Activated T-helper 1 cell treated with anti-CD3 and anti-CD28 coated beads, Interleukin-12 subunit alpha, Interleukin-12 subunit beta, Interleukin-2, Interleukin-4 antibody, amounts not matched to agents 30 ng/mL and 10 ng/mL and 1 ng/mL, durations not matched to agents 14 hours and 24 hours and 36 hours (primary cell): ENCODE measurements at regions of chr10 and their contacts with region 1.

Region 1: DNA sequence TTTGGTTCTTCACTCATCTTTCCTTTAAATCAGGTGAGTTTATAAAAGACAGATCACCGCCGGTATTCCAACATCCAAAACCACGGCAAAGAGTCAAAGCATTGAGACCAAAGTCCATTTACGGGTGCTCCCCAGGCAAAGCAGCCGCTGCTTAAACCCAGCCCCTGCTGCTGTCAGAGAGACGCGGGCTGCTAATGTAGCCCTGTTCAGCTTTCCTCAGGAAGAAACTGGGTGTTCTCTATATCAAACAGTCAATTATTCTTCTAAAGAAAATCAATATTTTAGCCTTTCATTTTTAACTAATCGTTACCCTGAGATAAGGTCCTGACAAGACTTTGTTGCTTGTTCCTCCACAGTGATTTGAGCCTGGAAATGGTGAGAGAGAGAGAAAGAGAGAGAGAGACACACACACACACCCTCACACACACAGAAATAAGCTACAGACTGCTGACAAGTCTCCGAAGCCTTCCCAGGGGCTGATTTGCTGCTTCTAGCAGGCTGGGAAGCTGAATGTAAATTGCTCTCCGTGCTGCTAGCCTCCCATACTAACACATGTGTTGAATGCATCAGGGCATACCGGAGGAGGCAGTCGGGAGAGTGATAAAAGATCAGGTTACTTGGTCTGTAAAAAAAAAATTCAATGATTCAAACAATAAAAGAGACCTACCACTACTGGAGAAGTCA is 183.0 kb upstream of the ANK3 start:
- DNase-seq: peak; percentile 21
- H3K4me3 Mint-ChIP-seq: peak overlapping the region; percentile 92
- H3K27ac Mint-ChIP-seq: peak overlapping the region; percentile 87
- H3K4me1 Mint-ChIP-seq: peaks cover 68% of the 10 kb centered on the region
- H3K27me3 Mint-ChIP-seq: no peaks in the 10 kb centered on the region

Region 2: DNA sequence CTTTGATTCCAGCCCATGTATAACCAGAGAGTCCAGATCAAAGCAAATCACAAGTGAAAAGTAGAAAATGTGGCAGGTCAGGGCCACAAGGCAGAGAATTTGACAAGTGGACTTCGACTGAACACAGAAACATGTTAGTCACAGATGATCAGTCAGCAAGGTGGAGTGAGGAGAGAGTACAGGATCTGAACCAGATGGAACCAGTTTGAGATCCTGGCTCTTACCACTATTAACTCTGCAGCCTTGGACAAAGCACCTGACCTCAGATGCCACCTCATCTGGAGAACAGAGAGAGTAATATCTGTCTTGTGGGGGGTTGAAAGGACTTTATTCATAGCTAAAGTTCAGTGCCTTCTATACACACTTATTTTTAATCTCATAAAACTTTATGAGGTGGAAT is 823.8 kb before region 1 on chr10:
- intact Hi-C with region 1: no loop called
- DNase-seq: no peak
- H3K4me3 Mint-ChIP-seq: no peak overlapping the region
- H3K27ac Mint-ChIP-seq: no peak overlapping the region
- H3K4me1 Mint-ChIP-seq: no peaks in the 10 kb centered on the region
- H3K27me3 Mint-ChIP-seq: peaks cover 10% of the 10 kb centered on the region

Region 3: GRCh38 chr10:60237977-60238758 is 334.5 kb before region 1 on chr10:
- intact Hi-C with region 1: loop called (anchors 10 kb)
- DNase-seq: no peak
- H3K4me3 Mint-ChIP-seq: peak overlapping the region; percentile 27
- H3K27ac Mint-ChIP-seq: peak overlapping the region; percentile 33
- H3K4me1 Mint-ChIP-seq: peaks cover 30% of the 10 kb centered on the region
- H3K27me3 Mint-ChIP-seq: no peaks in the 10 kb centered on the region

Region 4: GRCh38 chr10:60594476-60595051 is 21.9 kb after region 1 on chr10:
- intact Hi-C with region 1: loop called (anchors 1 kb)
- DNase-seq: no peak
- H3K4me3 Mint-ChIP-seq: no peak overlapping the region
- H3K27ac Mint-ChIP-seq: no peak overlapping the region
- H3K4me1 Mint-ChIP-seq: peaks cover 26% of the 10 kb centered on the region
- H3K27me3 Mint-ChIP-seq: no peaks in the 10 kb centered on the region

Region 5: GRCh38 chr10:60728056-60728455 is 155.4 kb after region 1 on chr10:
- intact Hi-C with region 1: loop called (anchors 2 kb)
- DNase-seq: peak; percentile 44
- H3K4me3 Mint-ChIP-seq: peak overlapping the region; percentile 69
- H3K27ac Mint-ChIP-seq: peak overlapping the region; percentile 77
- H3K4me1 Mint-ChIP-seq: peaks cover 90% of the 10 kb centered on the region
- H3K27me3 Mint-ChIP-seq: peaks cover 2% of the 10 kb centered on the region